ENCODE measurements at regions of chr18 and their contacts with region 1.

Region 1: DNA sequence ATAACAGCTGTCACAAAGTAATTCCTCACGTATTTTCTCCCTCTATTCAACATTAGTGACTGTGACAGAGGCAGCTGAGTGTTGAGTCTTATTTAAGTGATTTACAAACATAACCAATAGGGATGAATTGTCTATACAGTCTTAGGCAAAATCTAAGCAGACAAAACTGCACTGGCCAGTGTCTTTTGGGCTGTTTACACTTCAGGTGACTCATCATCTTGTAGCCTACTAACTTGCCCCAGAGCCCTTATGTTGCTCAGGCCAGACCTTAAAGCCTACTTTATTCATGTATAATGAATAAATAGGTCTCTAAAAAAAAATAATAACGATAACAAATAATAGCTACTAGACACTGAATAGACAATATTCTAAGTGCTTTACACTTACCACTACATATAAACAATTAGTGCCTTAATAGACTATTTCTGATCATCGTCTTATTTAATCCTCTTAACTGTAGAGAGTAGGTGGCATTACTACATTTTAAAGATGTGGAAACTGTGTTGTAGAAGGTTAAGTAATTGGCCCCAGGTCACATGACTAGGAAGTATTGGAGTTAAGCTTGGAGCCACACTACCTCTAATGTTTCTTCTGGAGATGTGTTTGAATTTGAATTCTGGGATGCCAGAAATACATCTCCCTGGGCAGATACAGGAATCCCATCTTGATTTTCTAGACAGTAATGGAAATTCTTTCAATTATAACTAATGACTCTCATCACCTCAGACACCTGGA is 17.0 kb downstream of the THOC1 start:
- DNase-seq: no peak
- ATAC-seq: no peak
- H3K4me3 ChIP-seq: no peak overlapping the region
- H3K27ac ChIP-seq: no peak overlapping the region
- H3K4me1 ChIP-seq: no peaks in the 10 kb centered on the region
- H3K27me3 ChIP-seq: no peaks in the 10 kb centered on the region
- CTCF ChIP-seq: no peak

Region 2: DNA sequence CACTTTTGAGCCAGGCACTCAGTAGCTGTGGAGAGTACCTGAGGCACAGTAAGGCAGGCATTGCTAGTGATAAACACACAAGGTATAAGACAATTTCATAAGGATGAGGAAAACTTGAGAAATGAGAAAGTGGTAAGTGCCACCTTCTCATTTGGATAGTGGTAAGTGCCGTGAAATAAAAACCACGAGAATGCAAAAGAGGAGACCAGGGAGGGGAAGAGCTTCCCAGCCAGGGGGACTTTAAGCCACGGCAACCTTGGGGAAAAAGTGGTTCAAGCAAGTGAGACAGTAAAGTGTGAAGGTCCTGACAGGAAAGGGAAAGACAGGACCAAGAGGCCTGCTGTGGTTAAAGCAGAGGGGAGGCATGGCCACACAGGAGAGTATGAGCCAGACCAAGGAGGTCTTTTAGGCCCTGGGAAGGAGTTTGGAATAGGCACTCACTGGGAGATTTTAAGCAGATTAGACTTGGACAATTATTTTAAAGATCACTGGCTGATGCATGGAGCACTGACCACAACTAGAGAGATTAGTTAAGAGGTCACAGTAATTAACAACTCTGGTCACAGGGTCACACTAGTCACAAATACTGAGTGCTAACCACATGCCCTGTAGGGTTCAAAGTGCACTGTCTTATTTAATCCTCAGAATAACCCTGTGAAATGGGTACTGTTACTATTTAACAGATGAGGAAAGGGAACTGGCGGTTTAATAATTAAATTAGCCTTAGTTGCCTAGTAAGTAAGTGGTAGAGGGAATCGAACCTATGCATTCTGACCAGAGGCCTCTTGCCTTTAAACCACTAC is 33.1 kb before region 1 on chr18:
- intact Hi-C with region 1: loop called (anchors 5 kb)
- DNase-seq: no peak
- ATAC-seq: no peak
- H3K4me3 ChIP-seq: no peak overlapping the region
- H3K27ac ChIP-seq: no peak overlapping the region
- H3K4me1 ChIP-seq: no peaks in the 10 kb centered on the region
- H3K27me3 ChIP-seq: no peaks in the 10 kb centered on the region
- CTCF ChIP-seq: no peak